ENCODE measurements at regions of chr15 and their contacts with region 1.

Region 1: DNA sequence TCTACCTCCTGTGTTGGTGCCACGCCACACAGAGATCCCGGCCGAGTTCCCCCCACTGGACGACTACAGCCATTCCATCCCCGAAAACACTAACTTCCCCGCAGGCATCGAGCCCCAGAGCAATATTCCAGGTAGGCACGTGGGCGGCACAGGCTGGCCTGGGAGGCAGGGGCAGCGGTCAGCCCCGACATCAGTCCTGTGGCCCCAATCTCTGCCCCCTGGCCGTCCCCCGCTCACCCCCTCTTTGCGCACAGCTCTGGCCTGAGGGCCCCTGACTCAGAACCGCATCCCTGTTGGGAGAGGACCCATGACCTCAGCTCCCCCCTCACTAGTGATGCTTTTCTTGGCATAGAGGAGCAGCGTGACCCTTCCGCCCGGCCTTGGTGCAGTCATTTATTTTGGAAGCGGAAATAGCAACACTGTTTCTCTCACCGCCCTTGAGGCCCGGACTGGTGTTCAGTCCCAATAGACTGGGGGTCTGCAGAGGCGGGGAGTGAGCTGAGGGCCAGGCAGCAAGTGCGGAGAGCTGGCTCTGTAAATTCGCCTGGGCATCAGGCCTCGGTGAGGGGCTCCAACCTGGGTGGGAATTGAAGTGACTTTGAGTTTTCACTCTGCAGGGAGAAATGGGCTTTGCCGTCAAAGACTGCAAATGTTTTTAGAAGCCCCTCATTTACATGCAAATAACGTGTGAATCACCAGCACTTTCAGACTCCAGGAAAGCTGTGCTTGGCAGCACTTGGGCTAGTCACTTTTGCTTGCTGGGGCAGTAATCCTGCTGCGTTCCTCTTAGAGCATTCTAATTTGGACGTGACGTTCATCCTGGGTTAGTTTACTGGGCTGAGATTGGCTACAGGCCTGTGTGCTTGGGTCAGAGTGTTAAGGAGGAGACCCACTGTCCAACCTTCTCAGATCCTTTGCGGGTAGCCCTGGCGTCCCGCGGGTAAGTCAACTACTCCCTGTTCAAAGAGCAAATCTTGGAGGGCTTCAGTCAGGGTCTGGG is 88.9 kb downstream of the AAGAB start:
- DNase-seq: peak; percentile 90

Region 2: DNA sequence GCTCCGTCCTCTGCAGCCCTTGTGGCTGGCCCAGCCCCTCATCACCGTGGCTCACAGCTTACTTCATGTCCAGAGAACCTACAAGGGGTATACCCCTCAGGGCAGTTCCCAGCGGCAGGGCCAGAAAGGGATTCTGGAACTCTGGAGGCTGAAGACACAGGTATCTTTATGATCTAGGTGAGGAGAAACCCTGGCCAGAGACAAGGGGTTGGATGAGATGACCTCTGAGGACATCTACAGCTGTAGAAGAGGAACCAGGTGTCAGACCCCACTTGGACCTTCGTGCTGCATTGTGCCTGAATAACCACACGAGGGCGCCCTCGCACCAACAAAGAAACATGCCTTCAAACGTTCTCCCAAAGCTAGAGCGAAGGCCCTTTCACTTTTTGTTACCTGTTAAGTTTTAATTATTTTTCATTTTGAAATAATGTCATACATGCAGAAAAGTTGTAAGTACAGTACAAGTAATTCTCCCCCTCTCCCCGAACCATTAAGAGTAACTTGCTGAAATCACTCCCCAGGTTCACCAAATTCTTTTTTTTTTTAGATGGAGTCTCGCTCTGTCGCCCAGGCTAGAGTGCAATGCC is 218.9 kb before region 1 on chr15:
- intact Hi-C with region 1: no loop called
- DNase-seq: peak; percentile 90

Region 3: GRCh38 chr15:67138891-67139855 is 26.4 kb before region 1 on chr15:
- intact Hi-C with region 1: loop called in 1 of 2 experiments (anchors 1 kb)
- DNase-seq: peak; percentile 58

Measured in posterior vena cava (tissue), 2 donors.